Panc1 (cell line): ENCODE measurements at regions of chr7 and their contacts with region 1.

Region 1: DNA sequence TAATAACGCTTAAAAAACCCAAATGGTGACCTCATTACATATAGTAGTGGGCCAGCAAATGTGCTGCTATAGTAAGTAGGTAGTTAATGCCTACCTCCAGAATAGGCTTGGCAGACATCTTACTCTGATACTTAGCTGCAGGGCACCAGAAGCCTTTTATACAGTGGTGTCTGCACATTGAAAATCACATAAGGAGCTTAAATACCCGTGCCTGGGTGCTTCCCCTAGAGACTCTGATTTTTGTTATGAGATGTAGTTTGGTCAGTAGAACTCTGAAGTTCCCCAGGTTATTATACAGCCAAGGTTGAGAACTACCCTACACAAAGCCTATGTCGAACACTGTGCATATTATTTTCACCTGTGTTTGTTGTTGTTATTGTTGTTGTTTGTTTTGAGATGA is 47.2 kb downstream of the ANKIB1 start:
- DNase-seq: no peak
- ATAC-seq: peak; percentile 60
- H3K4me3 ChIP-seq: no peak overlapping the region
- H3K27ac ChIP-seq: no peak overlapping the region
- H3K4me1 ChIP-seq: peaks cover 5% of the 10 kb centered on the region; the same call in 1 of the 2 replicates
- H3K27me3 ChIP-seq: no peaks in the 10 kb centered on the region
- CTCF ChIP-seq: no peak

Region 2: DNA sequence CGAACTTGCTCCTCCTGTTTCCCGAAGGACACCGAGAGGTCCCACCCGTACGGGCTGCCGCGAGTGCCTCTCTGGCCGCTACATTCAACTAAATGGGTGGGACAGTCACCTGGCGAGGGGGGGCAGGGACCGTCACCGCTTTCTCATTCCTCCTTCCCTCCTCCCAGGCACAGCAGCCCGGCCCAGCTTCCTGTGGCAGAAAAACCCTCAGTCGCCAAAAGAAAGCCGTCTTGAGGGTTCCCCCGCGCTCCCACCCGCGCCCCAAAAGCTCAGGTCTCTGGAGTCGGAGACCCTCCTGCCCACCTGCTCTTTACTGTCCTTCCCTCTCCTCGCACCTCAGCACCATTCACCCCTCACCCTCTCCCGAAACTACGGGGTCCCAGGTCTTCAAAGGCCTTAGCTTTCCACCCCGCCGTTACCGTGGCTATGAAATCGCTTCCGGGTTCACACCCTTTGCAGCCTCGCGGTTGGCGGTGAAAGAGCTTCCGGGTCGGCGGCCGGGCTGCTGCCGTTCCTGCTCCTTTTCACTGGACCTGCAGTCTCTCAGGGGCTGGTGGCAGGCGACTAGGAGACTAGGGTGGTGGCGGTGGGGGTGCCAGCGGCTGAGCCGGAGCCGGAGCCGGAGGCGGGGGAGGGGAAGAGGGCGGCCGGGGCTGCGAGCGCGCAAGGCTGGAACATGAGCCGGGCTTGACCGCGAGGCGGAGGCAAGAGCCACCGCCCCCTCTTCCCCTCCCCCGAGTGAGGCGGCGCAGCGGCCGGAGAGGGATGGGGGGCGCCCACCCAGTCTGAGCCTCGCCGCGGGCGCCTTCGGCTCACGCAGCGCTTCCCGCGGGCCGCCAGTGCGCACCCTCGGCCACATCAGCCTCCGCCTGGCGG is 47.3 kb before region 1 on chr7 and contains the starts of genes ANKIB1 and KRIT1:
- CTCF ChIA-PET with region 1: no interaction called
- POLR2A ChIA-PET with region 1: no interaction called
- in situ Hi-C with region 1: no loop called
- intact Hi-C with region 1: loop called (anchors 2 kb)
- DNase-seq: peak; percentile 75
- ATAC-seq: peak; percentile 95
- H3K4me3 ChIP-seq: peak within 1 kb of the TSS; percentile 94
- H3K27ac ChIP-seq: peak within 1 kb of the TSS; percentile 94
- H3K4me1 ChIP-seq: peaks cover 17% of the 10 kb centered on the region
- H3K27me3 ChIP-seq: no peaks in the 10 kb centered on the region
- CTCF ChIP-seq: no peak
- total RNA-seq, gene ANKIB1: 83.8 TPM
- total RNA-seq, gene KRIT1: 50.1 TPM